Calu3 (cell line): ENCODE measurements at regions of chr16 and their contacts with region 1.

Region 1: DNA sequence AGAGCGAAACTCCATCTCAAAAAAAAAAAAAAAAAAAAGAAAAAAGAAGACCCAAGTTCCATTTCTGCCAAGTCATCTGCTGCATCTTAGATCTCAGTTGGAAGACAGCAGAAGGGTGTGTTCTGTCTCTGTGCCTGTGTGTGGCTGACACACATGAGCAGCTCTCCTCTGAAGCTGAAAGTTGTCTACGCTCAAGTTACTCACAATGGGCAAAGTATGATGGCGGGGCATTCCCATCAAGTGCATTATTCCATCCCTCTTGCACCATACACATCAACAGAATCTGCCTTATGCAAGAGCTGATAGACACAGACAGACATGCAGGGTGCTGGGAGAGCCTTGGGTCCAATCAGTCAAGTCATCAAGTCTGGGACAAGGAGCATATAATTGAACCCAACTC is 402.2 kb downstream of the XYLT1 start:
- DNase-seq: no peak
- H3K4me3 Mint-ChIP-seq: no peak overlapping the region
- H3K27ac Mint-ChIP-seq: no peak overlapping the region
- H3K4me1 Mint-ChIP-seq: no peaks in the 10 kb centered on the region
- H3K27me3 Mint-ChIP-seq: peaks cover 20% of the 10 kb centered on the region
- CTCF ChIP-seq: no peak

Region 2: GRCh38 chr16:16908077-16908476 is 160.4 kb before region 1 on chr16:
- CTCF ChIA-PET with region 1: no interaction called
- intact Hi-C with region 1: no loop called
- DNase-seq: no peak
- H3K4me3 Mint-ChIP-seq: no peak overlapping the region
- H3K27ac Mint-ChIP-seq: no peak overlapping the region
- H3K4me1 Mint-ChIP-seq: no peaks in the 10 kb centered on the region
- H3K27me3 Mint-ChIP-seq: no peaks in the 10 kb centered on the region
- CTCF ChIP-seq: no peak

Region 3: DNA sequence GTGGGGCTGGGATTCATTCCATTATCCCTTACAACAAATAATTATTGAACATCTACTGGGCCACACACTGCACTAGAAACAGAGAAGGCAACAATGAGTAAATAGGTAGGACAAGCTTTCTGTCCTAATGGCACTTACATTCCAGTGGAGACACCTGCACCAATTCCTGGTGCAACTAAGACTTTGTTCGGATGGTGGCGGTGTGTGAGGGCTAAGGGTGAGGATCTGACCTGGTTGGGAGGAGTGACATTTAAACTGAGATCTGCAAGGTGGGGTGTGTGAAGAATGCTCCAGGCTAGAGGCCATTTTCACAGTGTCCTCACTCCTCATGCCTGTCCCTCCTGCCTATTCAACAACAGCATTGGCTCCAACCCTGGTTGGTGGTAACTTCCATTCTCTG is 107.7 kb before region 1 on chr16:
- CTCF ChIA-PET with region 1: no interaction called
- intact Hi-C with region 1: no loop called
- DNase-seq: no peak
- H3K4me3 Mint-ChIP-seq: no peak overlapping the region
- H3K27ac Mint-ChIP-seq: no peak overlapping the region
- H3K4me1 Mint-ChIP-seq: no peaks in the 10 kb centered on the region
- H3K27me3 Mint-ChIP-seq: no peaks in the 10 kb centered on the region
- CTCF ChIP-seq: no peak

Region 4: GRCh38 chr16:17277977-17278381 is 209.5 kb after region 1 on chr16:
- CTCF ChIA-PET with region 1: no interaction called
- intact Hi-C with region 1: no loop called
- DNase-seq: peak; percentile 54
- H3K4me3 Mint-ChIP-seq: no peak overlapping the region
- H3K27ac Mint-ChIP-seq: no peak overlapping the region
- H3K4me1 Mint-ChIP-seq: peaks cover 50% of the 10 kb centered on the region
- H3K27me3 Mint-ChIP-seq: no peaks in the 10 kb centered on the region
- CTCF ChIP-seq: peak; percentile 57

Region 5: GRCh38 chr16:17705847-17706246 is 637.3 kb after region 1 on chr16:
- CTCF ChIA-PET with region 1: interaction called, 10 read pairs
- intact Hi-C with region 1: no loop called
- DNase-seq: no peak
- H3K4me3 Mint-ChIP-seq: no peak overlapping the region
- H3K27ac Mint-ChIP-seq: no peak overlapping the region
- H3K4me1 Mint-ChIP-seq: no peaks in the 10 kb centered on the region
- H3K27me3 Mint-ChIP-seq: no peaks in the 10 kb centered on the region
- CTCF ChIP-seq: no peak